Activated T-helper 1 cell treated with anti-CD3 and anti-CD28 coated beads, Interleukin-12 subunit alpha, Interleukin-12 subunit beta, Interleukin-2, Interleukin-4 antibody, amounts not matched to agents 30 ng/mL and 10 ng/mL and 1 ng/mL, durations not matched to agents 14 hours and 24 hours and 36 hours (primary cell): ENCODE measurements at regions of chr13 and their contacts with region 1.

Region 1: GRCh38 chr13:114314074-114314912 is at the start of gene CHAMP1:
- DNase-seq: peak; percentile 93
- H3K4me3 Mint-ChIP-seq: peak within 1 kb of the TSS; percentile 90
- H3K27ac Mint-ChIP-seq: peak within 1 kb of the TSS; percentile 94
- H3K4me1 Mint-ChIP-seq: peaks cover 43% of the 10 kb centered on the region
- H3K27me3 Mint-ChIP-seq: peaks cover 1% of the 10 kb centered on the region
- total RNA-seq, gene CHAMP1: 40.5 and 42.3 TPM in 2 replicates

Region 2: GRCh38 chr13:114234645-114235421 is 79.5 kb before region 1 on chr13 and contains the start of gene CDC16:
- intact Hi-C with region 1: loop called (anchors 1 kb)
- DNase-seq: peak; percentile 80
- H3K4me3 Mint-ChIP-seq: peak within 1 kb of the TSS; percentile 88
- H3K27ac Mint-ChIP-seq: peak within 1 kb of the TSS; percentile 81
- H3K4me1 Mint-ChIP-seq: peaks cover 22% of the 10 kb centered on the region
- H3K27me3 Mint-ChIP-seq: peaks cover 8% of the 10 kb centered on the region
- total RNA-seq, gene CDC16: 91.4 and 93.2 TPM in 2 replicates

Region 3: GRCh38 chr13:114281351-114282040 is 32.8 kb before region 1 on chr13 and contains the start of gene UPF3A:
- intact Hi-C with region 1: loop called (anchors 1 kb)
- DNase-seq: peak; percentile 83
- H3K4me3 Mint-ChIP-seq: peak within 1 kb of the TSS; percentile 90
- H3K27ac Mint-ChIP-seq: peak within 1 kb of the TSS; percentile 98
- H3K4me1 Mint-ChIP-seq: peaks cover 52% of the 10 kb centered on the region
- H3K27me3 Mint-ChIP-seq: no peaks in the 10 kb centered on the region
- total RNA-seq, gene UPF3A: 45.9 and 48.3 TPM in 2 replicates

Region 4: GRCh38 chr13:114339857-114340534 is 25.7 kb after region 1 on chr13:
- intact Hi-C with region 1: loop called (anchors 1 kb)
- DNase-seq: peak; percentile 20
- H3K4me3 Mint-ChIP-seq: peak overlapping the region; percentile 3
- H3K27ac Mint-ChIP-seq: no peak overlapping the region
- H3K4me1 Mint-ChIP-seq: peaks cover 23% of the 10 kb centered on the region
- H3K27me3 Mint-ChIP-seq: peaks cover 12% of the 10 kb centered on the region